ENCODE measurements at regions of chr1 and their contacts with region 1.

Region 1: DNA sequence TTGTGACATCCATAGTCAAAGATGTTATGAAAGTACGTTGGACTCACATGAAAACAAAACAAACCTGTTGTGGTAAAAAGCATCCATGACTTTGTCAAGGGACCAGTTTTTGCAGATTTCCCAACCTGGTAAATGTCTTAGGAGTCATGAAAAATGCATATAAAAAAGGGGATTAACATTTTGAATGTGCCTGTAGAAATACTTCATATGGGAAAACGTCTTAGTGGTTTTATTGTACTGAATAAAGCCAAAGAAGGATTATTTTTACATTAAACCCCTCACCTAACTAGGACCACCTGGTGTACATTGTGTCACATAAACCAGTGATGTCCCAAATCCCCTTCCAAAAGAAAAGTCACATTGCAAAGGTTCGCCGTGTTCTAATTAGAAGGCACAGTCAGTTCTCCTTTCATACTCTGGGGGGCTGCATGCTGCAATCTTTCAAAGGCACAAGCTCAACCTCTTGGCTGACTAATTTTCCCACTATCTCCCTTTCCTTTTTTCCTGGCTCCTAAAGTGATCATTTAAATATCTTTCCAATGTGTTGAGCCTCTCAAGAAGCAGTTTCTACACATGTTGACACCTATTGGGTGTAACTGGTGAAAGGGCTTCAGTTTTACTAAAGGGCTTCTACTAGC is 119.8 kb upstream of the SPAG17 start:
- DNase-seq: no peak
- H3K4me3 ChIP-seq: no peak overlapping the region
- H3K27ac ChIP-seq: no peak overlapping the region
- H3K4me1 ChIP-seq: no peaks in the 10 kb centered on the region
- H3K27me3 ChIP-seq: no peaks in the 10 kb centered on the region
- CTCF ChIP-seq: peak; percentile 74

Region 2: DNA sequence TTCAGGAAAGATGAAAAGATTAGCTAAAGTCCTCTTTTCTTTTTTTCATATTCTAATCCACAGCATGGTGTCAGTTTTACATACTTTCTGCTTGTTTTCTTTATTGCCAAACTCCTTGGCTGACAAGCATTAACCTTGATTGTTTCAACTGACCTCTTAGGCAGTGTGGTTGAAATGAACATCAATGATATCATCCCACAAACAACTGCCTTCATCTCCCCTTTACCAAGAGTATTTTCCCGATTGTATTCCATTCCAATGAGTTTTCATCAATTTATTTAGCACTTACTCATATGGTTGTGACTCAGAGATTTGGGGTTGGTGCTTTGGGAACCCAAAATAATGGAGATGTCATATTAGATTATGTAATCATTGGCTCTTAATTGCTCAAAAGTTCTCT is 191.6 kb before region 1 on chr1:
- CTCF ChIA-PET with region 1: no interaction called
- dilution Hi-C with region 1: no loop called
- in situ Hi-C with region 1: no loop called
- intact Hi-C with region 1: no loop called
- DNase-seq: peak; percentile 77
- H3K4me3 ChIP-seq: no peak overlapping the region
- H3K27ac ChIP-seq: no peak overlapping the region
- H3K4me1 ChIP-seq: peaks cover 20% of the 10 kb centered on the region
- H3K27me3 ChIP-seq: peaks cover 7% of the 10 kb centered on the region
- CTCF ChIP-seq: no peak

Region 3: DNA sequence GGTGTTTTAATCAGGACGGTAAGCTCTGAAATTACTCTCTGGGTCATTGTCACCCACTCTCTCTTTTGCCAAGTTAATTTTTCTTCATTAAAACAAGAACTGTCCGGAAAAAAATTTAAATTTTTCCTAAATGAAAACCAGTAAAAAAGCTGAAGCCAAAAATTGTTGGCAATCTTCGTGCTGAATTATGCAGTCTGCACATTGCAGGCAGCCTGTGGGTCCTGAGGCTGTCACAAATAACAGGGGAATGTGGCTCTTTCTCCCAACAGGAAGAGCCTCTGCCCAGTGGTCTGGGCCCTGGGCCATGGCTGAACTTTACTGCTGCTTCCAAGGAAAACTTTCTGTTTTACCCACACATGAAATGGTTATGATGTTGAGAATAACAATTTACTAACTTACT is 34.1 kb after region 1 on chr1:
- CTCF ChIA-PET with region 1: no interaction called
- dilution Hi-C with region 1: no loop called
- in situ Hi-C with region 1: no loop called
- intact Hi-C with region 1: no loop called
- DNase-seq: no peak
- H3K4me3 ChIP-seq: no peak overlapping the region
- H3K27ac ChIP-seq: no peak overlapping the region
- H3K4me1 ChIP-seq: peaks cover 49% of the 10 kb centered on the region
- H3K27me3 ChIP-seq: no peaks in the 10 kb centered on the region
- CTCF ChIP-seq: no peak

Region 4: DNA sequence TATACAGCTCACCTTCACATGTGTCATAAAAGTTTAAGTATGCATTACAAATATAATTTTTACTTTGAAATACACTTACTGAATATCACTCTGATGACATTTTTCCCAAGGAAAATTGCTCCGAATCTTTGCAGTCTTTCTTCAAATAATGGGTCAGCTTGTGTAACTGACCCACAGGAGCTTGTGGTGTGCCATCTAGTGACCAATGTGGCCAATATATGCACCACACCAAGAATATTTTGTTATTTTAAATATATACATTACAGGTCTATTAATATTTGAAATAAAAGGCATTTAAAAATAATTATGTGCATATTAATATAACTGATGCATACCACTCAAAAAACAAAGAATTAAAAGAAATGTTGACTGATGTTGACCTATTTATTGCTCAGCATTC is 411.9 kb after region 1 on chr1:
- CTCF ChIA-PET with region 1: no interaction called
- dilution Hi-C with region 1: no loop called
- in situ Hi-C with region 1: no loop called
- intact Hi-C with region 1: loop called (anchors 1 kb)
- DNase-seq: no peak
- H3K4me3 ChIP-seq: no peak overlapping the region
- H3K27ac ChIP-seq: no peak overlapping the region
- H3K4me1 ChIP-seq: no peaks in the 10 kb centered on the region
- H3K27me3 ChIP-seq: no peaks in the 10 kb centered on the region
- CTCF ChIP-seq: peak in 1 of 2 donors; percentile 42